PC-9 (cell line): ENCODE measurements at regions of chr22 and their contacts with region 1.

Region 1: GRCh38 chr22:36331306-36331911 is 56.4 kb downstream of the MYH9 start:
- DNase-seq: peak; percentile 96 to 100
- H3K4me3 ChIP-seq: peak overlapping the region; percentile 42; the same call in 1 of the 2 replicates
- H3K27ac ChIP-seq: peak overlapping the region; percentile 96
- H3K4me1 ChIP-seq: peaks cover 83% of the 10 kb centered on the region
- H3K27me3 ChIP-seq: no peaks in the 10 kb centered on the region
- CTCF ChIP-seq: no peak

Region 2: GRCh38 chr22:36258701-36259614 is 72.5 kb before region 1 on chr22:
- CTCF ChIA-PET with region 1: no interaction called
- POLR2A ChIA-PET with region 1: no interaction called
- intact Hi-C with region 1: no loop called
- DNase-seq: no peak
- H3K4me3 ChIP-seq: no peak overlapping the region
- H3K27ac ChIP-seq: no peak overlapping the region
- H3K4me1 ChIP-seq: no peaks in the 10 kb centered on the region
- H3K27me3 ChIP-seq: no peaks in the 10 kb centered on the region
- CTCF ChIP-seq: no peak

Region 3: GRCh38 chr22:36301384-36301828 is 30.0 kb before region 1 on chr22:
- CTCF ChIA-PET with region 1: interaction called, 5 read pairs
- POLR2A ChIA-PET with region 1: interaction called, 3 read pairs
- intact Hi-C with region 1: loop called (anchors 1 kb)
- DNase-seq: peak; percentile 64 to 84
- H3K4me3 ChIP-seq: no peak overlapping the region
- H3K27ac ChIP-seq: no peak overlapping the region
- H3K4me1 ChIP-seq: peaks cover 21% of the 10 kb centered on the region
- H3K27me3 ChIP-seq: no peaks in the 10 kb centered on the region
- CTCF ChIP-seq: peak; percentile 100

Region 4: DNA sequence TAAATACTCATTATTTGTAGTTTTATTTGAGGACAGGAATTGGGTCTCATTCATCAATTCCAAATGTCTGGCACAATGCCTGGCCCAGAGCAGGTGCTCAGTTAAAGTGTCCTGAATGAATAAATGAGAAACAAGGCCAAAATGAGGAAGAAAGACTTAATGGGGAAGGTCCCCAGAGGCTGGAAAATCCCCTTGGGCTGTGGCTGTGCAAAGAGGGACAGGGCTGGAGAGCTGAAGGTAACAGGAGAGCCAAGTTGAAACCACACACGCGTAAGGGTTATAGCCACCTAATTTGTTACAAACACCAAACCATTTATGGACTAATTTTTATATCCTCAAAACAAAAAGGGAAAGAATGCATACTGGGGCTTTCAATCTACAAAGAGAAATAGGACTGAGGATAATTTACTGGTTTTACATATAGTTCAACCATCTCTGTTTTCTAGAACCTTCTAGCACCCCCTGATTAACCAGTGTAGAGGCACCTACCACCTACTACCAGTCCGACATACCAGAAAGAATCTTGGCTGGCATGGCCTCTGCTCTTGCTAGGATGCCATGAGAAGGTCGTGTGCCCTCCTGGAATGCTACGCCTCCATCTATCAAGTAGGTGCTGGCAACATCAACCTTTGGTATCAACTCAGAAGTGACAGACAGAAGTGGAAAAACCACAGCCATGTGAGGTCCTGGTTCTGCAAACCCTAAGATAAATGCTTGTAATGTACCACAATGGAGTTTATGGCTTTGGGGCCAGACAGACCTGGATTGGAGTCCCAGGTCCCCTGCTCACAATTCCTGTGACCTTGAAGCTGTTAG is 28.0 kb after region 1 on chr22:
- CTCF ChIA-PET with region 1: interaction called, 5 read pairs
- POLR2A ChIA-PET with region 1: interaction called, 21 read pairs
- intact Hi-C with region 1: loop called (anchors 2 kb)
- DNase-seq: no peak
- H3K4me3 ChIP-seq: no peak overlapping the region
- H3K27ac ChIP-seq: peak overlapping the region; percentile 25
- H3K4me1 ChIP-seq: peaks cover 75% of the 10 kb centered on the region
- H3K27me3 ChIP-seq: no peaks in the 10 kb centered on the region
- CTCF ChIP-seq: no peak

Region 5: DNA sequence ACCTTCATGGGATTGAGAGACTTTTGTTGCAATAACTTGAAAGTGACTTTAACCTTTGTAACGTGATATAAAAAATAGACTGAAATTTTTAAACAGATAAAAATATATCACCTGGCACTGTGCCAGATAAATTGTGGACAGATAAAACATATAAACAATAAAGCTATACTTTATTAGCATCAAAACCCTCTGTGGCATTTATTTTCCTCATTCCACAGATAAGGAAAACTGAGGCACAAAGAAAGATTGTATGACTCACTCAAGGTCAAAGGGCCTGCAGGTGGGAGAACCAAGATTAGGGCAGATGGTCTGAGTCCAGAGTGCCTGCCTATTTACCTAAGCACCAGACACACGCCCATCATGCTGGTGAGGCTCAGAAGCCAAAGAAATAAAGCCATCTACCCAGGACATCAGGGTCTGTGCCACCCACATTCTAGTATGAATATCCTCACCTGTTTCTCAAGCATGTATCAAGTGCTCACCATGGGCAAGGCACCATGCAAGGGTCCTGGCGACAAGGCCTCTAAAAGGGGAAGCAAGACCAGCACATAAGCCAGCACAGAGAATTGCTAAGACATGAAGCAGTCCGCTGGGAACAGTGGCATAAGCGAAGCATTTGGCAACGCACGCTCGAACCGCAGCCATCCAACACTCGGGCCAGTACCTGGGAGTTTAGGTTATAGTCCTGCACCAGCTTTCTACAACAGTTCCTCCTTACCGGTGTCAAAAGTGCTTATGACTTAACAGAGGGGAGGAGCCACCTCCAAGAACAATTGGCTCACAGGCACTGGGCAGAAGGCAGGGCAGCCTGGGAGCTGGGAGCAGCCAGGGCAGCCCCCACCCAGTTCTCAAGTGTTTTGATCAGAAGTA is 38.7 kb after region 1 on chr22:
- CTCF ChIA-PET with region 1: interaction called, 3 read pairs
- POLR2A ChIA-PET with region 1: interaction called, 5 read pairs
- intact Hi-C with region 1: loop called (anchors 1 kb)
- DNase-seq: peak; percentile 80 to 93
- H3K4me3 ChIP-seq: peak overlapping the region; percentile 43
- H3K27ac ChIP-seq: peak overlapping the region; percentile 78
- H3K4me1 ChIP-seq: peaks cover 100% of the 10 kb centered on the region
- H3K27me3 ChIP-seq: no peaks in the 10 kb centered on the region
- CTCF ChIP-seq: no peak

Region 6: DNA sequence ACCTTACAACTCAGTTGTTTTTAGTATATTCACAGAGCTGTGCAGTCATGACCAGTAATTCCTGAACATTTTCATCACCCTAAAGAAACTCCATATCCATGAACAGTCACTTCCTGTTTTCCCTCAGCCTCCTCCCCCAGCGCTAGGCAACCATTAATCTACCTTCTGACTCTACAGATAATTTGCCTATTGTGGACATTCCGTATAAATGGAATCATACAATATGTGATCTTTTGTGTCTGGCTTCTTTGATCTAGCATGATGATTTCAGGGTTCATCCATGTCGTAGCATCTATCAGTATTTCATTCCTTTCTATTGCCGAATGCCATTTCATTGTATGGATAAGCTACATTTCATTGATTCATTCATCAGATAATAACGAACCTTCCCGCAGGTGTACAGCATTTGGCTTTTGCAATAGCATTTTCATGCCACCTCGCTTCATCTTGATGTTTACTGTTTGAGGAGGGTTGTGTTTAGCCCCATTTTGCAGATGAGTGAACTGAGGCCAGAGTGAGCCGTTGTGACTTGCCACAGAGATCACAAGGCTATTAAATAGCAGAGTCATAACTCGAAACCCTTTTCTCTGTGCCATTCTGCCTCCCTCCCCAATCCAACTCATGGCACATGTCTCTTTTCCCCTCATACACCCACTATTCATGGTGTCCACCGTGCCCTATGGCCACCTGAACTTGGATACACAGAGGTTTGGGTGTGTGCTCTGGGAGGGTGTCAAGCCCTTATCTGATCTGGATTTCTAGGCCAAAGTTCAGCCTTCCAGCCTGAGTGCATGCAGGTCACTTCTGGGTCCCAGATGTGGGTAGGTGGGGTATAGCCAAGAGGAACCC is 67.4 kb after region 1 on chr22:
- CTCF ChIA-PET with region 1: no interaction called
- POLR2A ChIA-PET with region 1: interaction called, 15 read pairs
- intact Hi-C with region 1: no loop called
- DNase-seq: peak; percentile 45 to 91
- H3K4me3 ChIP-seq: no peak overlapping the region
- H3K27ac ChIP-seq: peak overlapping the region; percentile 78
- H3K4me1 ChIP-seq: peaks cover 76% of the 10 kb centered on the region
- H3K27me3 ChIP-seq: no peaks in the 10 kb centered on the region
- CTCF ChIP-seq: no peak

Region 7: DNA sequence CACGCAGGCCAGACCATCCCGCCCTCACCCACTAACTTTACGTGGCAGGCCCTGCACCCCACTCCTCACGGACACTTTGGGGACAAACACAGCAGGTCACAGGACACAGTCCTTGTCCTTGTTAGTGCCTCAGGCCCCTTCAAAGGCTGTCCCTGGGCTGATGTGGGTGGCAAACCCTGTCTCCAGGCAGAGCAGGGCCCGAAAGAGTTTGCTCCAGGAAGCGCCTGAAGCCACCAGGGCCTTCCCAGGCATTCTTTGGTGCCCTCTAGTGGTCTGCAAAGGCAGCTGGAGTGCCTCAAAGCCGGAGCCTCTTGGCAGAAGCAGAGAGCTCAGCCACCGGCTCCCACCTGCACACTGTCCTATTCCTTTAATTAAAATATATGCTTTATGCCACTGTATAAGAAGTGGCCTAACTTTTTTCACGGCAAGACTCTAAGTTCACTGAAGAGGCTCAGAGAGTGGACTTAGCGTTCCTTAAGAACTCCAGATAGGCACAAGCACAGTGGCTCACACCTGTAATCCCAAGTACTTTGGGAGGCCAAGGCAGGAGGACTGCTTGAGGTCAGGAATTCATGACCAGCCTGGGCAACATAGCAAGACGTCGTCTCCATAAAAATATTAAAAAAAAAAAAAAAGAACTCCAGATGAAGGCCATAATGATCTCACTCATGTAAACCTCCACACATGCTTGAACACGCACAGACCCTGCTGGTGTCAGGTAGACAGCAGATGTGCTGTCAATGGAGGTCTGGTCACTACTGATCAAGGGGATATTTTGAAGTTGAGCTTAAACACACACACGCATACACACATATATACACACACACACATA is 139.0 kb after region 1 on chr22:
- CTCF ChIA-PET with region 1: interaction called, 4 read pairs
- POLR2A ChIA-PET with region 1: interaction called, 26 read pairs
- intact Hi-C with region 1: loop called (anchors 1 kb)
- DNase-seq: peak; percentile 77 to 86
- H3K4me3 ChIP-seq: no peak overlapping the region
- H3K27ac ChIP-seq: no peak overlapping the region
- H3K4me1 ChIP-seq: peaks cover 66% of the 10 kb centered on the region
- H3K27me3 ChIP-seq: no peaks in the 10 kb centered on the region
- CTCF ChIP-seq: peak; percentile 99